WTC11 (cell line): ENCODE measurements at regions of chr3 and their contacts with region 1.

Region 1: DNA sequence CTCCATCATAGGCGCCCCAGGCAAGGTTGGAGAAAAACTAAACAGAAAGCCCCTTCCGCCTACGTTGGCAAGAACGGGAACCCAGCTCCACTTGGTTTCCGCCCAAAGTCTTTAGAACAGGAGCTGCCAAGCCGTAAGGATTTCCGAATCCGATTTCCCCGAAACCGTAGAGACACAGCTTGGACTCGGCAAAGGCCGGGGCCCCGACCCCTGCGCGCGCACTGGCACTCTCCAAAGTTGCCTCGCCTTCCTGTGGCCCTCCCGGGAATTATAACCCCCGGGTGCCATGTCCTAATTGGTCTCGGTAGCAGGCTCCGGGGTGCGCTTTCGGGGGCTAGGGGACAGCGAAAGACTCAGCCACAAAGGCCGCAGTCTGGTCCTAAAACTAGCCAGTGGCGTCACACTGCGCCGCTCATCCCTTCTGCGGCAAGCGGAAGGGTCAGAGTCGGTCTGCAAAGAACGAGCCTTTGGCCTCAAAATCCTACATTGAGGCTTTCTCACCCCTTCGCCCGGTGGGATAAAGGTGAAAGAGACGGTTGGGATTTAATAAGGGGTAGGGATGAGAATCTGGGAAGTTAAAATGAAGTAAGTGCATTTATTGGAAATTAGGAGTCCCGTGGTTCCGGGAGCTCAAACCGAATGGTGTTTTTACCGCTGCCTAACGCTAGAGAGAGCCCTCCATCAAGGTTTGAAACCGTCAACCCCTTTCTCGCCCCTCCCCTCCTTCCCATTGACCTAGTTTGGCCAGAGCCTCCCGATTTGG is 6.8 kb downstream of the BCL6 start:
- DNase-seq: peak; percentile 86
- ATAC-seq: peak; percentile 59
- H3K4me3 Mint-ChIP-seq: peak overlapping the region; percentile 82
- H3K27ac Mint-ChIP-seq: peak overlapping the region; percentile 93
- H3K4me1 Mint-ChIP-seq: peaks cover 48% of the 10 kb centered on the region
- H3K27me3 Mint-ChIP-seq: peaks cover 32% of the 10 kb centered on the region
- CTCF ChIP-seq: 0 out of 2 replicates have a peak, but pooled peaks have one; percentile 16

Region 2: GRCh38 chr3:187870360-187871203 is 132.1 kb after region 1 on chr3:
- CTCF ChIA-PET with region 1: no interaction called
- POLR2A ChIA-PET with region 1: no interaction called
- DNase-seq: no peak
- ATAC-seq: no peak
- H3K4me3 Mint-ChIP-seq: no peak overlapping the region
- H3K27ac Mint-ChIP-seq: no peak overlapping the region
- H3K4me1 Mint-ChIP-seq: no peaks in the 10 kb centered on the region
- H3K27me3 Mint-ChIP-seq: no peaks in the 10 kb centered on the region
- CTCF ChIP-seq: no peak

Region 3: GRCh38 chr3:187880851-187881250 is 142.3 kb after region 1 on chr3:
- CTCF ChIA-PET with region 1: no interaction called
- POLR2A ChIA-PET with region 1: no interaction called
- DNase-seq: no peak
- ATAC-seq: no peak
- H3K4me3 Mint-ChIP-seq: no peak overlapping the region
- H3K27ac Mint-ChIP-seq: no peak overlapping the region
- H3K4me1 Mint-ChIP-seq: no peaks in the 10 kb centered on the region
- H3K27me3 Mint-ChIP-seq: no peaks in the 10 kb centered on the region
- CTCF ChIP-seq: no peak

Region 4: GRCh38 chr3:187989575-187990153 is 251.2 kb after region 1 on chr3:
- CTCF ChIA-PET with region 1: interaction called, 11 read pairs
- POLR2A ChIA-PET with region 1: interaction called, 3 read pairs
- DNase-seq: peak; percentile 75
- ATAC-seq: peak; percentile 97
- H3K4me3 Mint-ChIP-seq: peak overlapping the region; percentile 70
- H3K27ac Mint-ChIP-seq: peak overlapping the region; percentile 99
- H3K4me1 Mint-ChIP-seq: peaks cover 40% of the 10 kb centered on the region
- H3K27me3 Mint-ChIP-seq: no peaks in the 10 kb centered on the region
- CTCF ChIP-seq: no peak

Region 5: GRCh38 chr3:188183452-188183851 is 444.9 kb after region 1 on chr3:
- CTCF ChIA-PET with region 1: interaction called, 10 read pairs
- POLR2A ChIA-PET with region 1: no interaction called
- DNase-seq: no peak
- ATAC-seq: no peak
- H3K4me3 Mint-ChIP-seq: no peak overlapping the region
- H3K27ac Mint-ChIP-seq: peak overlapping the region; percentile 34
- H3K4me1 Mint-ChIP-seq: peaks cover 43% of the 10 kb centered on the region
- H3K27me3 Mint-ChIP-seq: no peaks in the 10 kb centered on the region
- CTCF ChIP-seq: no peak

Region 6: DNA sequence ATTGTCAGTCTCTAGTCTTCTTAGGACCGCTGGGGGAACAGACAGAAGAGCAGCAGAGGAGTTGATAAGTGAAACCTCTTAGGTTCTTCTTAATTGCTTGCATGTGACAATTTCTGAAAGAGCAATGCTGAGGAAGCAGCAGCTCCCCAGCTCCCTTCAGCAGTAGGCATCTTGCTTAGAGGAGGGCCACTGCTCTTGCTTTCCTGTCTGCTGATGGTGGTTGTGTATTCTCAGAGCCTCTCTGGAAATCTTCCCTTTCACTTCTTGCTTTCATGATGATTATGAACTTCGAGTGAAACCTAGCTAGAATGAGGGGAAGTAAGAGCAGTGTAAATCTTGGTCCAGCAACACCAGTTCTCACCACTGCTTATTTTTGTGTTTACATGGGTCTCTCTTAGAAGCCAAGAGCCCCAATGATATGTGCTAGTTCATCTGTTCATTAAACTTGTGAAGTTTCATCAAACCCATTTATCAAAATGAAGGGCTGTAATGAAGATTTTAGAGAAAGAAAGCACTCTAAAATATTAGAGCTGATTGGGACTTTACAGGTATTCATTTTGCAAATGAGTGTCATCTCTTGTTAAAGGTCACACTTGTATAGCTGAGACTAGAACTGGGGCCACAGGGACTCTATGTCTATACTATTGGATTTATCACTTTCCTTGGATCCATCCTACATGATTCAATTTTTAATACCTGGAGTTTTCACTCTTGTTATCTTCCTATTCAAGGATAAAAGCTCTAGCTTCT is 662.2 kb after region 1 on chr3:
- CTCF ChIA-PET with region 1: interaction called, 16 read pairs
- POLR2A ChIA-PET with region 1: no interaction called
- DNase-seq: no peak
- ATAC-seq: no peak
- H3K4me3 Mint-ChIP-seq: no peak overlapping the region
- H3K27ac Mint-ChIP-seq: no peak overlapping the region
- H3K4me1 Mint-ChIP-seq: peaks cover 6% of the 10 kb centered on the region
- H3K27me3 Mint-ChIP-seq: no peaks in the 10 kb centered on the region
- CTCF ChIP-seq: no peak

Region 7: GRCh38 chr3:188792793-188793192 is 1054.3 kb after region 1 on chr3:
- CTCF ChIA-PET with region 1: interaction called, 25 read pairs
- POLR2A ChIA-PET with region 1: no interaction called
- DNase-seq: peak; percentile 48
- ATAC-seq: peak; percentile 86
- H3K4me3 Mint-ChIP-seq: no peak overlapping the region
- H3K27ac Mint-ChIP-seq: peak overlapping the region; percentile 29; the same call in 1 of the 2 replicates
- H3K4me1 Mint-ChIP-seq: peaks cover 20% of the 10 kb centered on the region
- H3K27me3 Mint-ChIP-seq: no peaks in the 10 kb centered on the region
- CTCF ChIP-seq: 0 out of 2 replicates have a peak, but pooled peaks have one; percentile 12

Region 8: DNA sequence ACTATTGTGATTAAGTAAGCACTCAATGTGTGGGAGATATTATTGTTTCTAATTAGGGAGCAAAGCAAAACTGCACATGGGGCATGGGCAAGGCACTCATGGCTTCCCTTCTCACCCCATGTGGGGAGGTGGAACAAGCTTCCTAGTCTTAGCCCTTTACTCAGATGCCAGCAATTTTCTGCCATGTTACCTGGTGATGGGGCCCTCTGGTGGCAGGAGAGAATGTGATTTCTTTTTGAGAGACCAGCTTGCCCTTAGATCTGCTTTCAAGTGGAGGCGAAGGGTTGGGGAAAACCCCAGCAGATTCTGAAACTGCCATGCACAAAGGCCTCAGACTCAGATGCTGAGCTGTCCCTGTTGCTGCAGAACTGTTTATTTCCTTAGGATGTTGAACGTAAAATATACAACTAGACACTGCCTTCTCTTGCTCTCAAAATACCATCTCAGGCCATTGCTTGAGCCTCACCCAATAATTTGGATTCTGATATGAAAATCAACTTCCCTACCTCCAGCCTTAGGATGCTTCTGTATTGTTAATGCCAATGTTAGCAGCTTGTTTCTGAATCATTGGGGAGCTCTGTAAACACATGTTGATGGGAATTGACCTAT is 1303.1 kb after region 1 on chr3:
- CTCF ChIA-PET with region 1: interaction called, 18 read pairs
- POLR2A ChIA-PET with region 1: no interaction called
- DNase-seq: peak; percentile 67
- ATAC-seq: peak; percentile 96
- H3K4me3 Mint-ChIP-seq: no peak overlapping the region
- H3K27ac Mint-ChIP-seq: no peak overlapping the region
- H3K4me1 Mint-ChIP-seq: 0 out of 2 replicates have a peak, but pooled peaks cover 2% of the 10 kb centered on the region
- H3K27me3 Mint-ChIP-seq: no peaks in the 10 kb centered on the region
- CTCF ChIP-seq: peak; percentile 40; the same call in 1 of the 2 replicates